Caco-2 (cell line): ENCODE measurements at regions of chr10 and their contacts with region 1.

Region 1: GRCh38 chr10:72567884-72568640 is 57.8 kb downstream of the MICU1 start:
- DNase-seq: peak in 1 of 2 experiments; percentile 41
- H3K4me3 ChIP-seq: no peak overlapping the region
- H3K4me3 Mint-ChIP-seq: no peak overlapping the region
- H3K27ac Mint-ChIP-seq: no peak overlapping the region
- H3K4me1 ChIP-seq: no peaks in the 10 kb centered on the region
- H3K4me1 Mint-ChIP-seq: no peaks in the 10 kb centered on the region
- H3K27me3 ChIP-seq: no peaks in the 10 kb centered on the region
- H3K27me3 Mint-ChIP-seq: no peaks in the 10 kb centered on the region
- CTCF ChIP-seq: peak; percentile 61 to 64

Region 2: GRCh38 chr10:72375585-72375984 is 192.5 kb before region 1 on chr10:
- CTCF ChIA-PET with region 1: interaction called, 3 read pairs
- POLR2A ChIA-PET with region 1: no interaction called
- intact Hi-C with region 1: loop called (anchors 5 kb)
- DNase-seq: peak in 1 of 2 experiments; percentile 60
- H3K4me3 ChIP-seq: no peak overlapping the region
- H3K4me3 Mint-ChIP-seq: no peak overlapping the region
- H3K27ac Mint-ChIP-seq: no peak overlapping the region
- H3K4me1 ChIP-seq: no peaks in the 10 kb centered on the region
- H3K4me1 Mint-ChIP-seq: no peaks in the 10 kb centered on the region
- H3K27me3 ChIP-seq: no peaks in the 10 kb centered on the region
- H3K27me3 Mint-ChIP-seq: no peaks in the 10 kb centered on the region
- CTCF ChIP-seq: peak; percentile 22 to 62

Region 3: DNA sequence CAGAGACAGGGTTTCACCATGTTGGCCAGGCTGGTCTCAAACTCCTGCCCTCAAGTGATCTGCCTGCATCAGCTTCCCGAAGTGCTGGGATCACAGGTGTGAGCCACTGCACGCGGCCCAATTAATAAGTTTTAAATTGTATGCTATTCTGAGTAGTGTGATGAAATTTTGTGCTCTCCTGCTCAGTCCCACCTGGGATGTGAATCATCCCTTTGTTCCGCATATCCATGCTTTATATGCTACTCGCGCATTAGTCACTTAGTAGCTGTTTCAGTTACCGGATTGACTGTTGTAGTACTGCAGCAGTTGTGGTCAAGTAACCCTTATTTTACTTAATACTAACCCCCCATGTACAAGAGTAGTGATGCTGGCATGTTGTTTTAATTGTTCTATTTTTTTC is 278.2 kb after region 1 on chr10:
- CTCF ChIA-PET with region 1: no interaction called
- POLR2A ChIA-PET with region 1: no interaction called
- intact Hi-C with region 1: no loop called
- DNase-seq: no peak
- H3K4me3 ChIP-seq: no peak overlapping the region
- H3K4me3 Mint-ChIP-seq: no peak overlapping the region
- H3K27ac Mint-ChIP-seq: no peak overlapping the region
- H3K4me1 ChIP-seq: no peaks in the 10 kb centered on the region
- H3K4me1 Mint-ChIP-seq: no peaks in the 10 kb centered on the region
- H3K27me3 ChIP-seq: no peaks in the 10 kb centered on the region
- H3K27me3 Mint-ChIP-seq: no peaks in the 10 kb centered on the region
- CTCF ChIP-seq: no peak